Breast epithelium (tissue), 4 donors: ENCODE measurements at regions of chr9 and their contacts with region 1.

Region 1: GRCh38 chr9:86230858-86231257 is 28.6 kb downstream of the C9orf153 start:
- DNase-seq: no peak
- H3K4me3 ChIP-seq: no peak overlapping the region
- H3K27ac ChIP-seq: no peak overlapping the region
- H3K4me1 ChIP-seq: no peaks in the 10 kb centered on the region
- H3K27me3 ChIP-seq: no peaks in the 10 kb centered on the region
- CTCF ChIP-seq: no peak
- POLR2A ChIP-seq: no peak

Region 2: GRCh38 chr9:86287013-86287412 is 56.2 kb after region 1 on chr9:
- intact Hi-C with region 1: no loop called
- DNase-seq: no peak
- H3K4me3 ChIP-seq: no peak overlapping the region
- H3K27ac ChIP-seq: no peak overlapping the region
- H3K4me1 ChIP-seq: no peaks in the 10 kb centered on the region
- H3K27me3 ChIP-seq: no peaks in the 10 kb centered on the region
- CTCF ChIP-seq: no peak
- POLR2A ChIP-seq: no peak

Region 3: DNA sequence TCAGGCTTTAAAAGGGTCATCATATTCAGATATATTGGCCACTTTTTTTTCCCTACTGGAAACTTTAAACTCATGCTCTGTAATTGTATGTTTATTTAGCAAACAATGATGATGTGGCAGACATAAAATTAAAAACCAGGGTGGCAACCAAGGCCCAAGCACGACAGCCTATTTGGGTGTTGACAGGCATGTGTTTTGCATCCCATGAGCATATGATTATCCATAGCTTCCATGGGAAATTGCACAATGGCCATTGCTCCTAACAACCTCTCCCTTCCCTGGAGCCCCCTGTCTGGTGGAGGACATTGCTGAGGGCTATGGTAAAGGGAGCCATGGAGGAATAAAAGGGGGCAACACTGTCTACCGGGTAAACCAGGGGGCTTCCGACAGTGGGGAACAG is 581.8 kb after region 1 on chr9:
- intact Hi-C with region 1: no loop called
- DNase-seq: no peak
- H3K4me3 ChIP-seq: no peak overlapping the region
- H3K27ac ChIP-seq: no peak overlapping the region
- H3K4me1 ChIP-seq: no peaks in the 10 kb centered on the region
- H3K27me3 ChIP-seq: no peaks in the 10 kb centered on the region
- CTCF ChIP-seq: no peak
- POLR2A ChIP-seq: no peak

Region 4: DNA sequence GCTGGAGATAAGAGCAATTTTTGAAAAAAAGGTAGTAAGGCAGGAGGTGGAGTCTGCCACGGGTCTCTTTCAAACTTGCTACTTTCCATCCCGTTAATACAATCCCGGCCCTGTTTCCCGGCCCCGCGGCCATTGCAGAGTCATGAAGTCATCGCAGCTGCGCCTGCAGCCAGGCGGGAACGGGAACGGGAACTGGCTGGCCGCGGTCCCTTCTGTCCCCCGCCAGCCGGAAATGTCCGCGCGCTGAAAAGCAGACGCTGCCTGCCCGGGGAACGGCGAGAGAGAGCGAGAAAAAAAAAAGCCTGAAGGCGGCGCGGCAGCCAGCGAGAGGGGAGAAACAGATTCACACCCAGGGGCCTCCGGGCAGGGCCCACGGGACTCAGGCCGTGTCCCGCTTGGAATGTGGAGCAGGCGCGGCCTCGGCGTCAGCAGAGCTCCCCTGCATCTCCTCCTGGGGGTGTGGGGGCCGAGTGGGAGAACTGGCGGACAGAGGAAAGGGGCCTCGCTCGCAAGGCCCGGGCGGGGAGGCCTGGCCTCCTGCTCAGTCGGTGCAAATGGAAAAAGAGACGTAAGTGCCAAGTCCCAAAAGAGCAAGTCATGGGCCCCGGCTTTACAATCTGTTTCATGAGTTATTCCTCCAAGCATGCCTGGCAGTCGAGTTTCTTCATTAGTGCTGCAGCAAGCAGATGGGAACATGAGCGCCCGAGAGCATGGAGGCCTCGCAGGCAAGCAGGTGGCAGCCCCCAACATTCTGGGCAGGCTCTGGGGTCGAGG is 917.7 kb after region 1 on chr9:
- intact Hi-C with region 1: no loop called
- DNase-seq: peak; percentile 56 to 74
- H3K4me3 ChIP-seq: peak overlapping the region; percentile 32 to 66 (median 48)
- H3K27ac ChIP-seq: peak overlapping the region; percentile 87 to 89
- H3K4me1 ChIP-seq: no peaks in the 10 kb centered on the region
- H3K27me3 ChIP-seq: no peaks in the 10 kb centered on the region
- CTCF ChIP-seq: peak in 1 of 3 donors; percentile 21
- POLR2A ChIP-seq: no peak

Region 5: GRCh38 chr9:87372337-87372851 is 1141.5 kb after region 1 on chr9:
- intact Hi-C with region 1: loop called (anchors 5 kb)
- DNase-seq: no peak
- H3K4me3 ChIP-seq: no peak overlapping the region
- H3K27ac ChIP-seq: no peak overlapping the region
- H3K4me1 ChIP-seq: no peaks in the 10 kb centered on the region
- H3K27me3 ChIP-seq: peaks cover 0 to 8% of the 10 kb centered on the region in 2 donors
- CTCF ChIP-seq: no peak
- POLR2A ChIP-seq: no peak